Dendritic cell treated with granulocyte-macrophage colony-stimulating factor and Interleukin-4, amounts not matched to agents 40 ng/mL and 50 ng/mL, for 4 days (primary cell): ENCODE measurements at regions of chr4 and their contacts with region 1.

Region 1: DNA sequence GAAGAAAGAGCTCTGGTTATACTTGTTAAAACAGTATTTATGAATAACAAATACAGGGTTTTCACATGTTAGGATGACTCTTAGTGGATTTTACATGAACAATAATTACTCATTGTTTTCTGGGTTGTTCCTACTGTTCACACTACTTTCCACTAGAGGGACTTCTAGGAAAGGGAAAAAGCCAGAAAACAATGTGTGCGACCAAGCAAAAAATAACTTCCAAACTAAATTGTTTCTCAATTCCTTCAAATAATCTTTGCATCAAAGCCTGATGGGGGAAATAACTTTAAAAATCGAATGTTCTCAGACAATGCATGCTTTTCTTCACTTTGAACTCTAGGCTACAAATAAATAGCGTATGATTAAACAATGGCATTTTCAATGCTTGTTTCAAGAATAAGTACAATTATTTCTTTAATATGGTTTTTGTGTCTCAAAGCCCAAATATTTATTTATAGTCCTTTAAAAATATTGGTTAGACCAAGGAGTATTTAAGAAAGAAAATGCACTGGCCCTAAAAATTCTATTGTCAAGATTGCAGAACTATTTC is 72.1 kb upstream of the ETNPPL start:
- H3K4me3 Mint-ChIP-seq: no peak overlapping the region
- H3K27ac Mint-ChIP-seq: no peak overlapping the region
- H3K4me1 Mint-ChIP-seq: no peaks in the 10 kb centered on the region
- H3K27me3 Mint-ChIP-seq: peaks cover 10% of the 10 kb centered on the region

Region 2: DNA sequence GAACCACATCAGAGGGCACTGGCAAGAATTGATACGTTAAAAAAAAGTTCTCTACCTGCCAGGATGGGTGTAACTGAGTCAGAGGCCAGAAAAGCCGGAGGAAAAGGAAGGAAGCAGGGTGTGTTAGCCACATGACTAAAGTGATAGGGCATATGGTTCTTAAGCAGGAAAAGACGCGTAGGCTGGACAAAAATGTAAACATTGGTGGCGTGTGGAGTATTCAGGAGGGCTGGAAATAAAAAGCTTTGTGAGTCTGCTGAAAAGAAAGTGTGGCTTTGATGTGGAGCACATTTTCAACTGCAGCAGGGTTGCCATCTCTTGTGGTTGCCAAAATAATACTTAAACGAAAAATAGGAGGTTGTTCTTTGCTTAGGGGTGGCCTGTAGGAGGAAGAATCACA is 401.1 kb before region 1 on chr4:
- intact Hi-C with region 1: no loop called
- H3K4me3 Mint-ChIP-seq: no peak overlapping the region
- H3K27ac Mint-ChIP-seq: no peak overlapping the region
- H3K4me1 Mint-ChIP-seq: no peaks in the 10 kb centered on the region
- H3K27me3 Mint-ChIP-seq: no peaks in the 10 kb centered on the region

Region 3: GRCh38 chr4:108783665-108784463 is 51.0 kb before region 1 on chr4:
- intact Hi-C with region 1: no loop called
- H3K4me3 Mint-ChIP-seq: no peak overlapping the region
- H3K27ac Mint-ChIP-seq: no peak overlapping the region
- H3K4me1 Mint-ChIP-seq: no peaks in the 10 kb centered on the region
- H3K27me3 Mint-ChIP-seq: no peaks in the 10 kb centered on the region

Region 4: DNA sequence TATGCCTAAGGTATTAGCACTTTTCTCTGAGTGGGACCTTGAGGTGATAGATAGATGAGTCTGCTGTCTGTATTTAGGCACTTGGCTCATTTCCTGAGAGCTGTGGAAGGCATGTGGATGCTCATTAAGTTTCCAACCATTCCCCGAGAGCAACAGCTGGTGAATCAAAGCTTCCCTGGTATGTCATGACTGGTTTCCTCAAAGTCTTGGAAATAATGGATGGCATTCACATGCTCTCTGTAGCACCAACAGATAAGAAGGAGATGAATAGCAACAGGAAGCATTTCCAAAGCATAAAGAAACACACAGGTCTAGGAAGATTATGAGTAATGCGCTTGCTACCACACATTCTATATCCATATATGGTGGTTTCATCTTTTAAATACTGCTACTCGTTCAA is 46.3 kb after region 1 on chr4:
- intact Hi-C with region 1: no loop called
- H3K4me3 Mint-ChIP-seq: no peak overlapping the region
- H3K27ac Mint-ChIP-seq: no peak overlapping the region
- H3K4me1 Mint-ChIP-seq: no peaks in the 10 kb centered on the region
- H3K27me3 Mint-ChIP-seq: no peaks in the 10 kb centered on the region

Region 5: GRCh38 chr4:108926061-108926460 is 91.2 kb after region 1 on chr4:
- intact Hi-C with region 1: no loop called
- H3K4me3 Mint-ChIP-seq: no peak overlapping the region
- H3K27ac Mint-ChIP-seq: no peak overlapping the region
- H3K4me1 Mint-ChIP-seq: peaks cover 5% of the 10 kb centered on the region
- H3K27me3 Mint-ChIP-seq: no peaks in the 10 kb centered on the region

Region 6: DNA sequence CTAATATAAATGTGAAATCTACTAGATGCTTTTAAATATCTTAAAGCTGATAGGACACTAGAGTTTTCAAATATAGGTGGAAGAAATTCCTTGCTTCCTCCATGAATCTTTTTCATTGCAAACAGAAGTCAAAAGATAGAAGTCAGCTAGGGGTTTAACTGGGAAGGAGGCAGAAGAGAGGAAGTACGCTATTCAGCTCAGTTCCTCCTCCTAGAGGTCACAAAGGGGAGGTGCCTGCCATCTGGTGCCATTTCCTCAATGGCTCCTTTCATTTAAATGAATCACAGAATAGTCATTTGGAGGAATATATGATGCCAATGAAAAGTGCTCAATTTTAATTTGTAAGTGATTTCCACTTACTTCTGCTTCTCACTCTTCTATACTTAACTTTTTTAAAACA is 459.1 kb after region 1 on chr4:
- intact Hi-C with region 1: loop called (anchors 2 kb)
- H3K4me3 Mint-ChIP-seq: no peak overlapping the region
- H3K27ac Mint-ChIP-seq: no peak overlapping the region
- H3K4me1 Mint-ChIP-seq: no peaks in the 10 kb centered on the region
- H3K27me3 Mint-ChIP-seq: peaks cover 14% of the 10 kb centered on the region

Region 7: DNA sequence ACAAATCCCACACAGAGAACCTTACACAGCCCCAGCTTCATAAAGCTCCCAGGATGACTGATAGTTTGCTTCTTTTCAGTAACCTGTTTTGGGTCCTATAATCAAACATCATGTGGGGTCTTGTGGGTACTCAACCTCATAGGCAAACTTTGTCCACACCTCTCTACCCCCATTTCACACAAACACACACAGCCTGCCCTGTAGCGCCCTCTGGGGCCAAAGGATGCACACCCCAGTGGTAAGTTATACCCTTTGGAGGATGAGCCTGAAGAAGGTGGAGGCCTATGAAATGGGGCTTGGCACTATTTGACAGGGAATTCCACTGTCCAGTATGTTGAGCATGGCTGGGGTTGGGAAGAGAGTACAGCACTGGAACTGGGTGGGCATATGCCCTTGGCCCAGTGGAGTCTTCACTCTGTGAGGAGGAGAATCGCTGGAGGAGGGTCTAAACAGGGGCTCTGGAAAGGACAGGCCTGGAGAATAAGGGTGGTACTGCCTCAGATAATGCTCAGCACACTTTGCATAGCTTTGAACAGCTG is 498.1 kb after region 1 on chr4:
- intact Hi-C with region 1: loop called (anchors 2 kb)
- H3K4me3 Mint-ChIP-seq: no peak overlapping the region
- H3K27ac Mint-ChIP-seq: no peak overlapping the region
- H3K4me1 Mint-ChIP-seq: no peaks in the 10 kb centered on the region
- H3K27me3 Mint-ChIP-seq: peaks cover 9% of the 10 kb centered on the region

Region 8: DNA sequence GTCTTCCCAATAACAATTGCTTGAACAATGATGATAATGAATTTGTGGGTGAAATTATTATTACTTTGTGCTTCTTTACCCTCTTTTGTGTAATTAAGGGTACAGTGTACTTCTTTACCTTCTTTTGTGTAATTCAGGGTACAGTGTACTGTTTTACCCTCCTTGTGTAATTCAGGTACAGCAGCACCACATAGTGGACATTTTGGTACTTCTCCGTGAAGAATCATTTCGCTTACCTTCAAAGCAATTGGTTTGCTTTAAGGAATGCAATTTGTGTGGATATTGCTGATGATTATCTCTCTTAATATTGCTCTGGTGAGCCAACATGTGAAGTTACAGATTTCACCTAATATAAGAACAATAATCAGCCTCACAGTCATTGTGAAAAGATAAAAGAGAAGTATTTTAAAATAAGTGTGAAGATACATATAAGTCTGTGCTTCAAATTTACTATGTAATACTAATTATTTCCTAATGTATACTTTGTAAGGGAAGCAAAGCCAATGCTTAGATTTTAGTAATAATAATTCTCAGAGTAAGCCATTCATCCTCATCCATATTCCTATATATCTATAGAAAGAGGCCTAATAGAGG is 571.5 kb after region 1 on chr4:
- intact Hi-C with region 1: loop called (anchors 1 kb)
- H3K4me3 Mint-ChIP-seq: no peak overlapping the region
- H3K27ac Mint-ChIP-seq: no peak overlapping the region
- H3K4me1 Mint-ChIP-seq: no peaks in the 10 kb centered on the region
- H3K27me3 Mint-ChIP-seq: peaks cover 9% of the 10 kb centered on the region